ENCODE measurements at regions of chr4 and their contacts with region 1.

Region 1: GRCh38 chr4:2135083-2135482 is 76.0 kb downstream of the NAT8L start:
- DNase-seq: peak; percentile 84
- H3K4me3 Mint-ChIP-seq: peak overlapping the region; percentile 52
- H3K27ac Mint-ChIP-seq: peak overlapping the region; percentile 77
- H3K4me1 Mint-ChIP-seq: peaks cover 20% of the 10 kb centered on the region
- H3K27me3 Mint-ChIP-seq: no peaks in the 10 kb centered on the region

Region 2: GRCh38 chr4:2151544-2151943 is 16.5 kb after region 1 on chr4:
- intact Hi-C with region 1: no loop called
- DNase-seq: no peak
- H3K4me3 Mint-ChIP-seq: no peak overlapping the region
- H3K27ac Mint-ChIP-seq: no peak overlapping the region
- H3K4me1 Mint-ChIP-seq: no peaks in the 10 kb centered on the region
- H3K27me3 Mint-ChIP-seq: peaks cover 3% of the 10 kb centered on the region

Region 3: GRCh38 chr4:2172161-2172560 is 37.1 kb after region 1 on chr4:
- intact Hi-C with region 1: loop called (anchors 5 kb)
- DNase-seq: peak; percentile 88
- H3K4me3 Mint-ChIP-seq: peak overlapping the region; percentile 78
- H3K27ac Mint-ChIP-seq: peak overlapping the region; percentile 91
- H3K4me1 Mint-ChIP-seq: peaks cover 72% of the 10 kb centered on the region
- H3K27me3 Mint-ChIP-seq: no peaks in the 10 kb centered on the region

Measured in activated CD4-positive, alpha-beta T cell treated with anti-CD3 and anti-CD28 coated beads, Interleukin-2, amount 10 ng/mL, durations not matched to agents 24 days and 14 days (primary cell).